ENCODE measurements at regions of chr1 and their contacts with region 1.

Region 1: GRCh38 chr1:169024800-169025271 is 81.7 kb upstream of the ATP1B1 start:
- DNase-seq: peak; percentile 92
- ATAC-seq: peak; percentile 94
- H3K4me3 ChIP-seq: no peak overlapping the region
- H3K27ac ChIP-seq: peak overlapping the region; percentile 35; the same call in 1 of the 2 replicates
- H3K4me1 ChIP-seq: peaks cover 15% of the 10 kb centered on the region
- H3K27me3 ChIP-seq: no peaks in the 10 kb centered on the region
- CTCF ChIP-seq: no peak
- EP300 ChIP-seq: peak; percentile 77 to 88; a peak in 3 of 4 replicates
- POLR2A ChIP-seq: no peak
- RAD21 ChIP-seq: 0 out of 2 replicates have a peak, but pooled peaks have one; percentile 14

Region 2: GRCh38 chr1:168879916-168880734 is 144.7 kb before region 1 on chr1:
- CTCF ChIA-PET with region 1: no interaction called
- POLR2A ChIA-PET with region 1: no interaction called
- RAD21 ChIA-PET with region 1: no interaction called
- SMC1A ChIA-PET with region 1: no interaction called
- in situ Hi-C with region 1: no loop called
- intact Hi-C with region 1: no loop called
- DNase-seq: no peak
- ATAC-seq: no peak
- H3K4me3 ChIP-seq: no peak overlapping the region
- H3K27ac ChIP-seq: no peak overlapping the region
- H3K4me1 ChIP-seq: no peaks in the 10 kb centered on the region
- H3K27me3 ChIP-seq: no peaks in the 10 kb centered on the region
- CTCF ChIP-seq: no peak
- EP300 ChIP-seq: no peak
- POLR2A ChIP-seq: no peak
- RAD21 ChIP-seq: no peak

Region 3: DNA sequence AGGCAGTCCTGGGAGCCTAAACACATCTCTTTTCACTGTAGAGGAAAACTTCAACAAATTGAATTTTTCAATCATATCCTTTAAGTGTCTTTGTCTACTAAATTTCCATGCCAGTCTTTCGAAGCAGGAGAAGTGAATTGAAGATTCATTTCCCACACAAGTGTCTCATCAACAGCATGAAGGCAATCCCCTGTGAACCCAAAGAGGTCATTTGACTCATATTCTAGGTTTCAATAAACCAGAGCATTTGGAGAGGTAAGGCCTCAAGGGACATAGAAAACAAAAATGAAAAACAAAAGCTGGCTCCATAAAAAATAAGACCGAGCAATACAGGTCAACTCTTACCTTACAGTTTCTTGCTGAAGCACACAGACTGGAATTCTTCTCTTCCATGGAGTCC is 12.4 kb before region 1 on chr1:
- CTCF ChIA-PET with region 1: interaction called, 23 read pairs
- POLR2A ChIA-PET with region 1: interaction called, 33 read pairs
- RAD21 ChIA-PET with region 1: interaction called, 112 read pairs
- SMC1A ChIA-PET with region 1: interaction called, 149 read pairs
- in situ Hi-C with region 1: no loop called
- intact Hi-C with region 1: loop called (anchors 1 kb)
- DNase-seq: peak; percentile 73
- ATAC-seq: peak; percentile 82
- H3K4me3 ChIP-seq: no peak overlapping the region
- H3K27ac ChIP-seq: peak overlapping the region; percentile 54
- H3K4me1 ChIP-seq: peaks cover 21% of the 10 kb centered on the region
- H3K27me3 ChIP-seq: no peaks in the 10 kb centered on the region
- CTCF ChIP-seq: no peak
- EP300 ChIP-seq: peak; percentile 43 to 86; a peak in 2 of 4 replicates
- POLR2A ChIP-seq: no peak
- RAD21 ChIP-seq: no peak

Region 4: DNA sequence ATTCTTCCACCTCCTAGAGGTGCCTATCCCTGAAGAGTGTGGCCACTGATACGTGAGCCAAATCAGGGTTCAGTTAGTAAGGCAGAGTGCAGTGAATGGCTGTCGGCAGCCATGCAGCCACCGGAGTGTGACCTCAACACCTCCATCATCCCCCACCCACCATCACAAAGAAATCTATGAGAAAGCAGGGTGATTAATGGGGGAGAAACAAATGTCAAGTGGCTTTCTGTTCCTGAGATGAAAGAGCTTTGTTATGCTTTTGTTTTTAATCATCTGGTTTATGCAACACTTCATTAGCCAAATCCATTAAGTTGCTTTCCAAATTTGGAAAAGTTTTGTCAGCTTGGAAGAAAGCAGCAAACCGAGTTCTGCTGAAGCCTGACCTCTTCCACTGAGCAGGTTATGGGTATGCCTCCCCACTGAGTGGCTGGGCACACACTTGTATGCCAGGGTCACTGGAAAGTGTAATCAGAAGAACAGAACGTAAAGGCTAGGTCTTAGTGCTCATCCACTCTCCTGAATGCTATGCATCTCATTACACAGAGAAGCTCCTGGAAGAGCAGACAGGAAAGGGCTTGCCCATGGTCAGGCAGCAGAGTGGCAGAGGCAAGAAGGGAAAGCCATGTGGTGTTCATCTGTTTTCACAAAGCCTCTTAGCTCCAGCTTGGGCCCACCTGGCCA is 24.6 kb after region 1 on chr1:
- CTCF ChIA-PET with region 1: interaction called, 9 read pairs
- POLR2A ChIA-PET with region 1: interaction called, 52 read pairs
- RAD21 ChIA-PET with region 1: interaction called, 100 read pairs
- SMC1A ChIA-PET with region 1: interaction called, 343 read pairs
- in situ Hi-C with region 1: no loop called
- intact Hi-C with region 1: loop called (anchors 1 kb)
- DNase-seq: no peak
- ATAC-seq: peak; percentile 9
- H3K4me3 ChIP-seq: no peak overlapping the region
- H3K27ac ChIP-seq: no peak overlapping the region
- H3K4me1 ChIP-seq: peaks cover 44% of the 10 kb centered on the region
- H3K27me3 ChIP-seq: no peaks in the 10 kb centered on the region
- CTCF ChIP-seq: no peak
- EP300 ChIP-seq: peak in 1 of 2 experiments; percentile 52; a peak in 2 of 4 replicates
- POLR2A ChIP-seq: no peak
- RAD21 ChIP-seq: no peak

Region 5: GRCh38 chr1:169091480-169091941 is 66.7 kb after region 1 on chr1:
- CTCF ChIA-PET with region 1: no interaction called
- POLR2A ChIA-PET with region 1: interaction called, 5 read pairs
- RAD21 ChIA-PET with region 1: interaction called, 7 read pairs
- SMC1A ChIA-PET with region 1: interaction called, 12 read pairs
- in situ Hi-C with region 1: no loop called
- intact Hi-C with region 1: loop called (anchors 5 kb)
- DNase-seq: no peak
- ATAC-seq: peak; percentile 91
- H3K4me3 ChIP-seq: no peak overlapping the region
- H3K27ac ChIP-seq: peak overlapping the region; percentile 50
- H3K4me1 ChIP-seq: peaks cover 20% of the 10 kb centered on the region
- H3K27me3 ChIP-seq: no peaks in the 10 kb centered on the region
- CTCF ChIP-seq: no peak
- EP300 ChIP-seq: no peak
- POLR2A ChIP-seq: no peak
- RAD21 ChIP-seq: no peak

Region 6: DNA sequence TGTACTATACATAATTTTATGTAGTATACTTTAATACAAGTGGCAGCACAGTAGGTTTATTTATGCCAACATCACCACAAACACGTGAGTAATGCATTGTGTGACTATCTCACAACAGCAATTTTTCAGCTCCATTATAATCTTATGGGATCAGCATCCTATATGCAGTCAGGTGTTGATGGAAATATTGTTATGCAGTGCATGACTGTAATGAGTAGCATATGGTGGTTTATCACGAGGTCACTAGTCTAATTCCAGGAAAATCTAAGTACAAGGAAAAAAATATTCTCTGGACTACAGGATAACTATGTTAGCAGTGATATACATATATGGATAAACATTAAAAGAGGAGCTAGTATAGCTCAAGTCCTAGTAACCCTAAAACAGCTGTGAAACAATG is 150.6 kb after region 1 on chr1:
- CTCF ChIA-PET with region 1: no interaction called
- POLR2A ChIA-PET with region 1: no interaction called
- RAD21 ChIA-PET with region 1: no interaction called
- SMC1A ChIA-PET with region 1: no interaction called
- in situ Hi-C with region 1: no loop called
- intact Hi-C with region 1: no loop called
- DNase-seq: no peak
- ATAC-seq: no peak
- H3K4me3 ChIP-seq: no peak overlapping the region
- H3K27ac ChIP-seq: no peak overlapping the region
- H3K4me1 ChIP-seq: no peaks in the 10 kb centered on the region
- H3K27me3 ChIP-seq: no peaks in the 10 kb centered on the region
- CTCF ChIP-seq: no peak
- EP300 ChIP-seq: no peak
- POLR2A ChIP-seq: no peak
- RAD21 ChIP-seq: no peak